Endothelial cell of umbilical vein (primary cell): ENCODE measurements at regions of chr1 and their contacts with region 1.

Region 1: DNA sequence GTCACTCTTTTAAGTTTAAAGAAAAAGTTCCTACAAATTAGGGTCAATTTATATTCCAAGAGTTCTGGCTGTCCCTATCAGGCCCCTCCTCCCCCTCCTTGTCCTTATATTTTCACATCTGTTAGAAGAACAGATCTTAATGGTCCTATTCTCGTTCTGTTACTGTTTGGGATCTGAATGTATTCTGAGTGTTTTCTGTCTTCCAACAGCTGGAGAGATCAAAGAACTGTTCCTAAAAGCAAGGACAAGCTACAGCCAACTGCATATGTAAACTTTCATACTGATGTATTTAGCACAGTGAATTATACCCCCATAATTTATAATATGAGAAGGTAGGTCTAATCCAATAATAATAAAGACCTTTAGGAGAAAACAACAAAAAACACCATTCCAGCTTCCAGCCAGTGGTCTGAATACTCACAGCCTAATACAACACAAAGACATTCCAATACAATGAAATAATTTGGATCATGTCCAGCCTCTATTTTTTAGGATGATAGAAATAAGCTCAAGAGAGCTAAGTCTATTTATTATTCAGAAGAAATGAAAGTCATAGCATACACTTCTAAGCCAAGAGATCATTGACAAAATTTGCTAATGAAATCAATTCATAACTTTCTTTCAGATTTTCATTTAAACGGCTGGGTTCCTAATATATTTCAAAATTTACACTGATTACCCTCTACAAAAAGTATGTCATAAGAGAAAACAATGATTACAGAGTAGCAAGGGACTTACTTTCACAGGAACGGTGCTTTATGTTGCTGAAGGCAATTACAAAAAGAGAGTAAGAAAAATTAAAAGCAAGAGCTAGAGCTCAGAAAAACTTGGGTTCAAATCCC is 25.3 kb downstream of the WLS start:
- DNase-seq: peak; percentile 93
- H3K4me3 ChIP-seq: peak overlapping the region in 1 of 3 experiments; percentile 40
- H3K27ac ChIP-seq: peak overlapping the region; percentile 91
- H3K4me1 ChIP-seq: peaks cover 34% of the 10 kb centered on the region
- H3K27me3 ChIP-seq: no peaks in the 10 kb centered on the region
- CTCF ChIP-seq: no peak
- POLR2A ChIP-seq: no peak

Region 2: GRCh38 chr1:68221621-68222373 is 14.7 kb after region 1 on chr1:
- CTCF ChIA-PET with region 1: interaction called, 5 read pairs
- POLR2A ChIA-PET with region 1: interaction called, 3 read pairs
- dilution Hi-C with region 1: no loop called
- intact Hi-C with region 1: loop called (anchors 1 kb)
- DNase-seq: peak; percentile 35
- H3K4me3 ChIP-seq: no peak overlapping the region
- H3K27ac ChIP-seq: no peak overlapping the region
- H3K4me1 ChIP-seq: peaks cover 14% of the 10 kb centered on the region
- H3K27me3 ChIP-seq: no peaks in the 10 kb centered on the region
- CTCF ChIP-seq: no peak
- POLR2A ChIP-seq: no peak